A673 (cell line): ENCODE measurements at regions of chr1 and their contacts with region 1.

Region 1: GRCh38 chr1:180156201-180156600 is 1.5 kb downstream of the QSOX1 start:
- DNase-seq: no peak
- H3K4me3 ChIP-seq: peak overlapping the region; percentile 72
- H3K27ac ChIP-seq: no peak overlapping the region
- H3K4me1 ChIP-seq: peaks cover 26% of the 10 kb centered on the region
- H3K27me3 ChIP-seq: no peaks in the 10 kb centered on the region
- CTCF ChIP-seq: no peak

Region 2: GRCh38 chr1:179867807-179868330 is 288.3 kb before region 1 on chr1:
- CTCF ChIA-PET with region 1: no interaction called
- POLR2A ChIA-PET with region 1: no interaction called
- intact Hi-C with region 1: loop called (anchors 5 kb)
- DNase-seq: peak; percentile 81
- H3K4me3 ChIP-seq: no peak overlapping the region
- H3K27ac ChIP-seq: no peak overlapping the region
- H3K4me1 ChIP-seq: peaks cover 17% of the 10 kb centered on the region
- H3K27me3 ChIP-seq: no peaks in the 10 kb centered on the region
- CTCF ChIP-seq: peak; percentile 86

Region 3: GRCh38 chr1:179973198-179974110 is 182.7 kb before region 1 on chr1:
- CTCF ChIA-PET with region 1: no interaction called
- POLR2A ChIA-PET with region 1: no interaction called
- intact Hi-C with region 1: no loop called
- DNase-seq: no peak
- H3K4me3 ChIP-seq: no peak overlapping the region
- H3K27ac ChIP-seq: no peak overlapping the region
- H3K4me1 ChIP-seq: no peaks in the 10 kb centered on the region
- H3K27me3 ChIP-seq: no peaks in the 10 kb centered on the region
- CTCF ChIP-seq: no peak

Region 4: GRCh38 chr1:181206513-181206912 is 1050.3 kb after region 1 on chr1:
- CTCF ChIA-PET with region 1: no interaction called
- POLR2A ChIA-PET with region 1: interaction called, 11 read pairs
- intact Hi-C with region 1: no loop called
- DNase-seq: no peak
- H3K4me3 ChIP-seq: no peak overlapping the region
- H3K27ac ChIP-seq: no peak overlapping the region
- H3K4me1 ChIP-seq: no peaks in the 10 kb centered on the region
- H3K27me3 ChIP-seq: peaks cover 21% of the 10 kb centered on the region
- CTCF ChIP-seq: no peak